Cardiac septum (tissue), 1 donor: ENCODE measurements at regions of chr1 and their contacts with region 1.

Region 1: GRCh38 chr1:61043010-61043820 is 39.1 kb upstream of the NFIA start:
- DNase-seq: peak; percentile 94

Region 2: GRCh38 chr1:60903591-60903990 is 139.6 kb before region 1 on chr1:
- intact Hi-C with region 1: loop called (anchors 5 kb)
- DNase-seq: no peak

Region 3: GRCh38 chr1:61005614-61006580 is 37.3 kb before region 1 on chr1:
- intact Hi-C with region 1: no loop called
- DNase-seq: no peak

Region 4: DNA sequence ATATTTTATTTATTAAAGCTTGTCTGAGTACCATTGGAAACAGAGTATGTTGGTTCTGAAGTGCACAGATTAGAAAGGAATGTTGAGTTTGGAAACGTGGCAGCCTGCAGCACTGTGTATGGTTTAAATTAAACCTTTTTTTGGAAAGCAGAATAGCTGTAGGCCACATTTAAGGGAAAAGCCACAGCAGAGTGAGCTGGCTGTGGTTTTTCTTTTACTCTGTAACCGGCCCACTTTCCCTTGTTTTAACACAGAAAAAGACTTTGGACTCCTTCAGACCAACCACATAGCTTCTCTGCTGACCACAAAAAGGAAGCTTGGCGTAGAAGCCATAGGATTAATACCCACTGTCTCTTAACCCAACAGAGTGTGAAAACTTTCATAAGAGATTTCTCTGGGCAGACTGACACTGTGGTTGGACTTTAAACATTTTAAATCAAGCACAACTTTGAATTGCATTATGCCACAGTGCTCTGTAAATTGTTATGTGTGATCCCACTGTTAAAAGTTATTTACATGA is 114.3 kb after region 1 on chr1:
- intact Hi-C with region 1: no loop called
- DNase-seq: no peak

Region 5: GRCh38 chr1:61368876-61369275 is 325.7 kb after region 1 on chr1:
- intact Hi-C with region 1: no loop called
- DNase-seq: no peak